AG04450 (cell line): ENCODE measurements at regions of chr22 and their contacts with region 1.

Region 1: DNA sequence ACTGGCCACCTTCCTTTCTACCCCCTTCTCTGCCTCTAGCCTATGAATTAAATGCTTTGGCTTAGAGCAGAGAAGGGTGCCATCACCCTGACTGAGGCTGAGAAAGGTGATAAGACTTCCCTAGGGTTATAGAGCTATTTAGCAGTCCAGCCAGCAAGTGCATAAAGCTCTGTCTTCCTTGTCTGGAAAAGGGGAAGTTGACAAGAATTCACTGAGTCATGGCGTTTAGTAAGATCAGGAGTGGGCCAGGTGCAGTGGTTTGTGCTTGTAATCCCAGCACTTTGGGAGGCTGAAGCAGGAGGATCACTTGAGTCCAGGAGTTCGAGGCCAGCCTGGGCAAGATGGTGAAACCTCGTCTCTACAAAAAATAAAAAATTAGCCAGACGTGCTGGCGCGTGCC is 63.1 kb downstream of the LHFPL7 start:
- DNase-seq: no peak
- H3K4me3 ChIP-seq: no peak overlapping the region
- H3K27ac ChIP-seq: no peak overlapping the region
- H3K27me3 ChIP-seq: no peaks in the 10 kb centered on the region
- CTCF ChIP-seq: no peak

Region 2: DNA sequence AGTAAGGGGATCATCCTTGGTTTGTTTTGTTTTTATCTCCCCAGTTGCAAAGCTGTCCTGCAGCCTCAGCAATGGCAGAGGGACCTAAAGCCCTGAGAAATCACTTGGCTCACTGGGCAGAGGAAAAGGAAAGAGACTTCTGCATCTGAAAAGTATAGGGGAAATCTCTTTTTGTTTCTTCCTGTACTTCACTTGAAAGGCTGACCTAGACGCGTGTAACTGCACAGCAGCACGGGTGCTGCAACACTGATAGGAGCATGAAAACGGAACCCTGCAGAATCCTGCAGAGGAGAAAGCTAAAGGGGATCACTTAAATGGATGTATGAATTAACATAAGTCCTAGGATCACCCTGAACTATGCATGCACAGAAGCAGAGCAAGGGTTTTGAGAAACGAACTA is 106.9 kb before region 1 on chr22:
- CTCF ChIA-PET with region 1: no interaction called
- POLR2A ChIA-PET with region 1: interaction called, 11 read pairs
- DNase-seq: no peak
- H3K4me3 ChIP-seq: no peak overlapping the region
- H3K27ac ChIP-seq: no peak overlapping the region
- H3K27me3 ChIP-seq: peaks cover 12% of the 10 kb centered on the region
- CTCF ChIP-seq: no peak